PC-3 (cell line): ENCODE measurements at regions of chr7 and their contacts with region 1.

Region 1: GRCh38 chr7:20959271-20959670 is 172.6 kb upstream of the SP8 start:
- DNase-seq: peak; percentile 92
- ATAC-seq: peak; percentile 94
- H3K4me3 ChIP-seq: peak overlapping the region; percentile 6; the same call in 1 of the 2 replicates
- H3K27ac ChIP-seq: peak overlapping the region; percentile 7; the same call in 1 of the 2 replicates
- H3K4me1 ChIP-seq: peaks cover 27% of the 10 kb centered on the region
- H3K27me3 ChIP-seq: peaks cover 37% of the 10 kb centered on the region
- CTCF ChIP-seq: no peak

Region 2: GRCh38 chr7:20991544-20991943 is 32.3 kb after region 1 on chr7:
- CTCF ChIA-PET with region 1: no interaction called
- POLR2A ChIA-PET with region 1: no interaction called
- intact Hi-C with region 1: no loop called
- DNase-seq: peak; percentile 28
- ATAC-seq: peak; percentile 35; the same call in 1 of the 2 replicates
- H3K4me3 ChIP-seq: no peak overlapping the region
- H3K27ac ChIP-seq: no peak overlapping the region
- H3K4me1 ChIP-seq: no peaks in the 10 kb centered on the region
- H3K27me3 ChIP-seq: peaks cover 25% of the 10 kb centered on the region
- CTCF ChIP-seq: peak; percentile 60

Region 3: GRCh38 chr7:21011118-21011517 is 51.8 kb after region 1 on chr7:
- CTCF ChIA-PET with region 1: no interaction called
- POLR2A ChIA-PET with region 1: no interaction called
- intact Hi-C with region 1: loop called (anchors 5 kb)
- DNase-seq: peak; percentile 97
- ATAC-seq: peak; percentile 91
- H3K4me3 ChIP-seq: no peak overlapping the region
- H3K27ac ChIP-seq: peak overlapping the region; percentile 64
- H3K4me1 ChIP-seq: peaks cover 24% of the 10 kb centered on the region
- H3K27me3 ChIP-seq: no peaks in the 10 kb centered on the region
- CTCF ChIP-seq: no peak

Region 4: DNA sequence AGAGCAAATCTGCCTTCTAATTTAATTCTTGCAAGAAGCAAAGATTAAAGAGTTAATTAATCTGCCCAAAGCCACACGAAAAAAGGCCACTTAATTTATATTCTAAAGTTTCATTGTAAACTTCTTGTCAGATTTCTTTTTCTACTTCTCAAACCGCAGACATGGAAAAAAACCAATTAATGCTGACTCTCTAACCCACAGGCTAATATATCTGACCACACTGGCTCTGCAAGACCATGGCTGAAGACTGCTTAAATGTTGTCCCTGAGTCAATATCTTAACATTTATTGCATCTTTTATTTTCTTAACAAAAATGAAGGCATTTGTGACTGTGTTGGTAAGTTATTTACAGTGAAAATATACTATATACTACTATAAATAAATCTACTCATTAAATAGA is 61.4 kb after region 1 on chr7:
- CTCF ChIA-PET with region 1: no interaction called
- POLR2A ChIA-PET with region 1: no interaction called
- intact Hi-C with region 1: loop called (anchors 2 kb)
- DNase-seq: peak; percentile 75
- ATAC-seq: peak; percentile 92
- H3K4me3 ChIP-seq: peak overlapping the region; percentile 40; the same call in 1 of the 2 replicates
- H3K27ac ChIP-seq: peak overlapping the region; percentile 65
- H3K4me1 ChIP-seq: peaks cover 12% of the 10 kb centered on the region
- H3K27me3 ChIP-seq: peaks cover 28% of the 10 kb centered on the region; the same call in 1 of the 2 replicates
- CTCF ChIP-seq: no peak

Region 5: DNA sequence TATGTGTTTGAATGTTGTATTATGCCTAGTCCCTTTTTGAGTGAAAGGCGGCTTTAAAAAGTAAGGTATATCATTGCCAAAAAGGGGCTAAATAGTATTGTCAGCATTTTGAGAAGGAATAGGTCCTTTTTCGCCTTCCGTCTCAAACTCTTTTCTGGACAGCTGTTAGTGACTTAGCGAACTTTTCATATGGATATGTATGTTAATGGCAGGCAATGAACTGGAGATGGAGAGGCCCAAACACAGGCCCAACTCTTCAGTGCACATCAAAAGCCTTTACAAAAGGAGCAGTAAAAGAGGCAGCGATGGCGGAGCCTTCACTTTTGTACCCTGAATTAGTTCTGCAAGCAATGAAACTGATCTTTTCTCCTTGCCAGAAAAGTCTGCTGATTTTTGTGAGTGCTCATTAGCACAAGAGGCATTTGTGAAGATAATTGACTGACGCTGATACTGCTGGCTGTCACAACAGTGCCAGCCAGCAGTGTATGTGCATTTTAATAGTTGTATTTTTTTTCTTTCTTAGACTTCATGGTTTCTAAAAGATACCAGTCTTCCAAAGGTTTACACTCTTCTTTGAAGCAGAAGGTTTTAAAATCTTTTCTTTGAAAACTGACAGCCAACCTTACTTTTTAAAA is 71.1 kb after region 1 on chr7:
- CTCF ChIA-PET with region 1: no interaction called
- POLR2A ChIA-PET with region 1: interaction called, 14 read pairs
- intact Hi-C with region 1: no loop called
- DNase-seq: no peak
- ATAC-seq: no peak
- H3K4me3 ChIP-seq: no peak overlapping the region
- H3K27ac ChIP-seq: no peak overlapping the region
- H3K4me1 ChIP-seq: no peaks in the 10 kb centered on the region
- H3K27me3 ChIP-seq: peaks cover 51% of the 10 kb centered on the region
- CTCF ChIP-seq: no peak